Ovary (tissue), 10 donors: ENCODE measurements at regions of chr10 and their contacts with region 1.

Region 1: GRCh38 chr10:102229810-102230263 is 3.7 kb downstream of the ELOVL3 start:
- DNase-seq: peak; percentile 75 to 87 (median 82)
- H3K4me3 ChIP-seq: peak overlapping the region; percentile 2
- H3K27ac ChIP-seq: no peak overlapping the region
- H3K4me1 ChIP-seq: peaks cover 18% of the 10 kb centered on the region
- H3K27me3 ChIP-seq: no peaks in the 10 kb centered on the region
- CTCF ChIP-seq: peak; percentile 80 to 92 (median 89)
- EP300 ChIP-seq: no peak
- POLR2A ChIP-seq: no peak

Region 2: DNA sequence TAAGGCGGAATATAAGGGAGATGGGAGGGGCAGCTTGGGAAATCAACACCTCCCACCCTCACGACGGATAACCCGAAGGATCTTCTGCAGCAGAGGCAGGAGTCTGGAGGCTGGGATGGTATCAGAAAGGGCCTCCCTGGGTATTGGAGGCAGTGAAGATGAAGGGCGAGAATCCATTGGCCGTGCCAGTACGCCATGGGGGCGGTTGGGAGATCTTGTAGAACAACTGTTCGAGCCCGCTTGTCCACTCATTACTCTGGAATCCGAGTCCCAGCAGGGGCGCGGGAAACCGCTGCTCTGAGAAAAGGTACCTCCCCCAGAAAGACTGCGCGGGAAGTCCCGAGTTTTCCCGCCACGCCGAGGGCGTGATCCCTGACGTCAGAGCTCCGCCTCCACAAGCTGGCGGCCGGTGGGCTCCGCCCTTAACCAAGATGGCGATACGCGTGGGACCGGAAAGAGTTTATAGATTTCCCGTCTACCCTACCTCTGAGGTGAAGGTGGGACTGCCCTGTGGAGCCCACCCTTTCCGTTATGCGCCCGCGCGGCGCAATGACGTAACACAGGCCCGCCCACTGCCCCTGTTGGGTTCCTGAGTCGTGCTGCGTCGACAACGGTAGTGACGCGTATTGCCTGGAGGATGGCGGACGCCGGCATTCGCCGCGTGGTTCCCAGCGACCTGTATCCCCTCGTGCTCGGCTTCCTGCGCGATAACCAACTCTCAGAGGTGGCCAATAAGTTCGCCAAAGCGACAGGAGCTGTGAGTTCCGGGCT is 77.9 kb before region 1 on chr10 and contains the start of gene NOLC1:
- intact Hi-C with region 1: loop called in 1 of 4 experiments (anchors 10 kb)
- DNase-seq: peak; percentile 98 to 99 (median 99)
- H3K4me3 ChIP-seq: peak within 1 kb of the TSS; percentile 90
- H3K27ac ChIP-seq: peak within 1 kb of the TSS; percentile 4 to 81
- H3K4me1 ChIP-seq: peaks cover 6% of the 10 kb centered on the region
- H3K27me3 ChIP-seq: no peaks in the 10 kb centered on the region
- CTCF ChIP-seq: peak in 1 of 3 donors; percentile 32
- EP300 ChIP-seq: peak; percentile 100
- POLR2A ChIP-seq: peak; percentile 96
- total RNA-seq, gene NOLC1: 32.7 to 68.1 (median 50.2) TPM

Region 3: GRCh38 chr10:102352066-102352715 is 122.4 kb after region 1 on chr10:
- intact Hi-C with region 1: loop called (anchors 2 to 5 kb)
- DNase-seq: peak; percentile 42 to 64 (median 52)
- H3K4me3 ChIP-seq: no peak overlapping the region
- H3K27ac ChIP-seq: no peak overlapping the region
- H3K4me1 ChIP-seq: no peaks in the 10 kb centered on the region
- H3K27me3 ChIP-seq: no peaks in the 10 kb centered on the region
- CTCF ChIP-seq: peak; percentile 63 to 67 (median 63)
- EP300 ChIP-seq: no peak
- POLR2A ChIP-seq: no peak

Region 4: DNA sequence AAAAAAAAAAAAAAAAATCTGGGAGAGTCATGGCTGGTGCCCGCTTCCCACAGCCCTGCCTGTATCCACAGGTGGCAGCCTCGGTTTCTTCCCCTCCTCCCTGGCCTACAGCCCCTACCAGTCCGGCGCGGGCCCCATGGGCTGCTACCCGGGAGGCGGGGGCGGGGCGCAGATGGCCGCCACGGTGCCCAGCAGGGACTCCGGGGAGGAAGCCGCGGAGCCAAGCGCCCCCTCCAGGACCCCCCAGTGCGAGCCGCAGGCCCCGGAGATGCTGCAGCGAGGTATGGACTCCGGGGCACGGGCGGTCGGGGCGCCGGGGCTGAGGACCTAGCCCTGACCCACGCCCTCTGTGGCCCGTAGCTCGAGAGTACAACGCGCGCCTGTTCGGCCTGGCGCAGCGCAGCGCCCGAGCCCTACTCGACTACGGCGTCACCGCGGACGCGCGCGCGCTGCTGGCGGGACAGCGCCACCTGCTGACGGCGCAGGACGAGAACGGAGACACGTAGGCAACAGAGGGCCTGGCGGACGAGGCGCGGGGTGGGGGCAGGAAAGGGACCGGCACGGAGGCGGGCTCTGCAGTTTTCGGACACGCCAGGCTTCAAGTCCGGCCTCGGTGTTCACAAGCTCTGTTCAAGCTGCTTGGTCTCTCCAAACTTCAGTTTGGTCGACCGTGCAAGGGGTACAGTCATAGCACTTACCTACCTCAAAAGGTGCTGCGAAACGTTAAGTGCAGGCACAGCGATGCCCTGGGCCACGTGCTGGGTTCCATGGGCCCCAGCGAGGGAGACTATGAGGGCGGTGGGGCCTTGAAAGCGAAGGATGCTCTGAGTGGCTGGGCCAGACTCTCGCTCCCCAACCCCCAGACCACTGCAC is 169.6 kb after region 1 on chr10:
- intact Hi-C with region 1: loop called in 1 of 4 experiments (anchors 5 kb)
- DNase-seq: peak; percentile 85 to 94 (median 90)
- H3K4me3 ChIP-seq: peak overlapping the region; percentile 55
- H3K27ac ChIP-seq: peak overlapping the region; percentile 90 to 92
- H3K4me1 ChIP-seq: peaks cover 11% of the 10 kb centered on the region
- H3K27me3 ChIP-seq: no peaks in the 10 kb centered on the region
- CTCF ChIP-seq: peak; percentile 98 to 99 (median 98)
- EP300 ChIP-seq: no peak
- POLR2A ChIP-seq: peak; percentile 63

Region 5: GRCh38 chr10:102476466-102477141 is 246.8 kb after region 1 on chr10:
- intact Hi-C with region 1: loop called in 2 of 4 experiments (anchors 10 kb)
- DNase-seq: no peak
- H3K4me3 ChIP-seq: no peak overlapping the region
- H3K27ac ChIP-seq: no peak overlapping the region
- H3K4me1 ChIP-seq: no peaks in the 10 kb centered on the region
- H3K27me3 ChIP-seq: no peaks in the 10 kb centered on the region
- CTCF ChIP-seq: no peak
- EP300 ChIP-seq: no peak
- POLR2A ChIP-seq: no peak

Region 6: GRCh38 chr10:102583435-102584417 is 353.9 kb after region 1 on chr10:
- intact Hi-C with region 1: loop called in 1 of 4 experiments (anchors 10 kb)
- DNase-seq: peak; percentile 82 to 90 (median 87)
- H3K4me3 ChIP-seq: no peak overlapping the region
- H3K27ac ChIP-seq: no peak overlapping the region
- H3K4me1 ChIP-seq: peaks cover 8% of the 10 kb centered on the region
- H3K27me3 ChIP-seq: no peaks in the 10 kb centered on the region
- CTCF ChIP-seq: peak; percentile 73 to 83 (median 77)
- EP300 ChIP-seq: no peak
- POLR2A ChIP-seq: no peak

Region 7: DNA sequence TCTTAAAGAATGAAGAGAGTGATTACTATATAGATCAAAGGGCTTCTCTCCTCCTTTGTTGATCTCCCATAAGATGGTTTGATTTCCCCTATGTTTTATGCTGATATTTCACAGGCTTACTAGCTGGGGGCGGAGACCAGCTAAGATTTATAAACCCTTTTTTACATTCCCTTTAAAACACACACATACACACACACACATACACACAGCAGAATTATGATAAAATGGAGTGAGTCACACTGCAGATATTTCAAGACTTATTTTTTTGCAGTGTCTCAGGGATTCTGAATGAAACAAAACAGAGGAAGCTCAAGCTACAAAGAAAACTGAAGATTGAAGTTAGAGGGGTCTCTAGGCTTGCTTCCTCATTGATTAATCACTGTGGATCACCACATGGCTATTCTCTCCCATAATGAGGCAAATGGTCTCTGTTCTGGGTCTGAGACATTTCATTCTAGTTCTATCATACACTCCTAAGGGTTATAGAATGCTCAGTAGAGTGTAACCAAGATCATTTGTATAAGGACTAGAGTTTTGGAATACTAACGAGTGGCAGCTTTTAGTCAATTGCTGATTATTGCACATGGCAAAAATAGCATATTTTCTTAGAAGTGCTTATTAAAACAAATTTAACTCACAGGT is 1065.7 kb after region 1 on chr10:
- intact Hi-C with region 1: no loop called
- DNase-seq: no peak
- H3K4me3 ChIP-seq: no peak overlapping the region
- H3K27ac ChIP-seq: no peak overlapping the region
- H3K4me1 ChIP-seq: no peaks in the 10 kb centered on the region
- H3K27me3 ChIP-seq: no peaks in the 10 kb centered on the region
- CTCF ChIP-seq: no peak
- EP300 ChIP-seq: no peak
- POLR2A ChIP-seq: no peak